BJ (cell line): ENCODE measurements at regions of chr4 and their contacts with region 1.

Region 1: GRCh38 chr4:52983563-52984303 is 121.6 kb downstream of the RASL11B start:
- DNase-seq: no peak
- H3K4me3 ChIP-seq: no peak overlapping the region
- H3K27me3 ChIP-seq: no peaks in the 10 kb centered on the region
- CTCF ChIP-seq: peak; percentile 62

Region 2: GRCh38 chr4:52376132-52376704 is 607.5 kb before region 1 on chr4:
- CTCF ChIA-PET with region 1: interaction called, 40 read pairs
- POLR2A ChIA-PET with region 1: no interaction called
- DNase-seq: peak; percentile 4
- H3K4me3 ChIP-seq: no peak overlapping the region
- H3K27me3 ChIP-seq: no peaks in the 10 kb centered on the region; the same call in 1 of the 2 replicates
- CTCF ChIP-seq: peak; percentile 45

Region 3: DNA sequence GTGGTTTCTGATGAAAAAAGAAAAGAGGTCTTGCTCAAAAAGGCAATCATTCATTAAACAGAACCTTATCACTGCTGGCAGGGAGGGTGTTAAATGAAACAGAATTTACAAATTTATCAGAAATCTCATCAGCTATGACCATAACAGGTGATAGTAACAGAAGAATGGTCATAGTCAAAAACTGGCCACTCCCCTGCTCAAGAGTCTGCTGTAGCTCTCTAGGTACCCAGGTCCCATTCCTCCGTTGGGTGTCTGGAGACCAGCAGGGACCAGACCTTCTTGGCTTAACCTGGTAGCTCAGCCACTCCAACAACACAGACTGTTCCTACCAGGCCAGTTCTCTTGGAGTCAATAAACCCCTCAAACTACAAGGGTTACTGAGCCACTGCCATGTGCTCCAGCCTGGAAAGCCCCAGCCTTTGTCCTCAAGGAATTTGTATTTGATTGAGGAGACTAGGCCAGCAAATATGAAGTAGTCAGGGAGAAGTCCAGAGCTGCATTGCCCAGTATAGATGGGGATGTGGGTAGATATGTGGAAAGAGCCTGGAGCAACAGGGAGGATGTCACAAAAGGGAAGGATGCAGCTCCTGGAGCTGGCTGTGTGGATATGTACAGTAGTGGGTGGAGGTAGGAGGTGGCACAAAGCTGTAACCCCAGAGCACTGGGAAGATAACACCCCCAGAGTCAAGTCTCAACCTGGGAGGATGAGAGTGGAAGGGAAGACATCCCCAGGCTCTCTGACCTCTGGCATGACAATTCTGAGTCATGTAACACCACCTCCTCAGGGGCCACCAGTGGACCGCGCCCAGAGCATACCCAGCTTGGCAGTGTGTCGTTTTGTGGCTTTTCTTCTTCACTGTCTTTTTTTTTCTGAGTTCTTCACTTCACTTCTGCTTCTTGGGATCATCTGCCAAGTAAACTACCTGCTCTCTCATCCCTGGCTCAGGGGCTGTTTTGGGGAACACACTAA is 99.7 kb before region 1 on chr4:
- CTCF ChIA-PET with region 1: no interaction called
- POLR2A ChIA-PET with region 1: no interaction called
- DNase-seq: no peak
- H3K4me3 ChIP-seq: no peak overlapping the region
- H3K27me3 ChIP-seq: no peaks in the 10 kb centered on the region
- CTCF ChIP-seq: no peak

Region 4: DNA sequence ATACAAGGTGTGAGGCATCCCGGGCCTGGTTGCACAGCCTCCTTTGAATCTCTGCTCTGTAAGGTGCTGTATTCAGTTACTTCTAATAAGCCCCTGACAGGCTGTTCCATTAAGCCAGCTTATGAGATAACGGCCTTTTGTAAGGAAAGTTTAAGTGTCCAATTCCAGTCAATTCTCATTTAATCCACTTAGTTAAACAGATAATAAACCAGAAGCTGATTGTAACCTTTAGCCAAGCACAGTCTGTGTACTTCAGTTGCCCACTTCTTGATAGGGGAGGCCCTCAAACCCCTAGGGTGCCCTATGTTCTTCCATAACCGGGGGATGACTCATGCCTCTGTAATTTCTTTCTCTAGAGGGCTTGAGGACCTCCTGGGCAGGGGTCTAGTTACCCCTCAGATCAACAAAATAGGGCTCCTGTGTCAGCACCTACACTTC is 58.2 kb before region 1 on chr4:
- CTCF ChIA-PET with region 1: no interaction called
- POLR2A ChIA-PET with region 1: no interaction called
- DNase-seq: no peak
- H3K4me3 ChIP-seq: no peak overlapping the region
- H3K27me3 ChIP-seq: no peaks in the 10 kb centered on the region
- CTCF ChIP-seq: no peak

Region 5: GRCh38 chr4:52939739-52940138 is 44.0 kb before region 1 on chr4:
- CTCF ChIA-PET with region 1: no interaction called
- POLR2A ChIA-PET with region 1: no interaction called
- DNase-seq: no peak
- H3K4me3 ChIP-seq: no peak overlapping the region
- H3K27me3 ChIP-seq: no peaks in the 10 kb centered on the region
- CTCF ChIP-seq: no peak

Region 6: DNA sequence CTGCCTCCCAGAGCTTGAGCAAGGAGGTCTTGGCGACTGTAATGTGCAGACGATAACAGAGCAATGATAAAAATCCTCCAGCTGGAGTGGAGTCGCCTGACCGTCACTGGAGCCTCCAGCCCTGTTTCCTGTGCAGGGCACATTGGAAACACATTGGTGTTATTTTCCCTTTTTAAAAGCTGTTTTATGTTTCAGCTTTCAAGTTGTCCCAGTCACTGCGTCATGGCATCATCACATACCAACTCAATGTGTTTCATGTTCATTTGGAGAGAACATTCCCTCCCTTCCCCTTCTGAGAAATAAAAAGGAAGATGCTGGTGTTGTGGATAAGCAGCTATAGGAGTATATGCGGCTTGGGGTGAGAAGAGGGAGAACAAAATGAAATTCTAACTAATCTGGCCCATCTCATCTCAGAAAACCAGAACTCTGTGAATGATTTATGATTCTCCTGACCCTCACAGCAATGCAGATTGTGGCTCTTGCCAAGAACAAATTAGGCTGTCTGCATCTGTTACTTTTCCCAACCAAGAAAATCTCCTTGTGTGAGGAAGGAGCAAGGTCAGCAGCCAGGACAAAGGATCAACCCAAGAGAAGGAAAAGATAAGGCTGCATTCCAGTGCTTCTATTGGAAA is 12.6 kb after region 1 on chr4:
- CTCF ChIA-PET with region 1: interaction called, 13 read pairs
- POLR2A ChIA-PET with region 1: no interaction called
- DNase-seq: no peak
- H3K4me3 ChIP-seq: no peak overlapping the region
- H3K27me3 ChIP-seq: no peaks in the 10 kb centered on the region
- CTCF ChIP-seq: no peak

Region 7: GRCh38 chr4:53450773-53451172 is 467.0 kb after region 1 on chr4:
- CTCF ChIA-PET with region 1: no interaction called
- POLR2A ChIA-PET with region 1: interaction called, 12 read pairs
- DNase-seq: no peak
- H3K4me3 ChIP-seq: no peak overlapping the region
- H3K27me3 ChIP-seq: no peaks in the 10 kb centered on the region
- CTCF ChIP-seq: no peak